T-cell (primary cell): ENCODE measurements at regions of chr17 and their contacts with region 1.

Region 1: DNA sequence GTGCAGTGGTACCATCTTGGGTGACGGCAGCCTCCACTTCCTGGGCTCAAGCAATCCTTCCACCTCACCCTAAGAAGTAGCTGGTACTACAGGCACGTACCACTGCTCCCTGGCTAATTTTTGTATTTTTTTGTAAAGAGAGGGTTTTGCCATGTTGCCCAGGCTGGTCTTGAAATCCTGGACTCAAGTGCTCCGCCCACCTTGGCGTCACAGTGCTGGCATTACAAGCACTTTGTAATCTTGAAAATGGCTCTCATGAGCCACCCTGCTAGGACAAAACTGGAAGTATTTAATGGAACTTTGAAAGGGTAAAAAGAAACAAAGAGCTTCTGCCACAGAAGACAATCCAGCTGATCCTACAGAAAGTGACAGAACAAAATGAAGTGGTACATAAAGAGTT is 9.2 kb downstream of the SUMO2 start:
- DNase-seq: no peak
- ATAC-seq: no peak
- H3K4me3 ChIP-seq: no peak overlapping the region
- H3K4me3 Mint-ChIP-seq: no peak overlapping the region
- H3K27ac ChIP-seq: no peak overlapping the region
- H3K27ac Mint-ChIP-seq: peak overlapping the region in 1 of 2 donors; percentile 36
- H3K4me1 ChIP-seq: peaks cover 0 to 25% of the 10 kb centered on the region in 2 experiments
- H3K4me1 Mint-ChIP-seq: peaks cover 16 to 24% (median 23%) of the 10 kb centered on the region in 3 donors
- H3K27me3 ChIP-seq: no peaks in the 10 kb centered on the region
- H3K27me3 Mint-ChIP-seq: no peaks in the 10 kb centered on the region

Region 2: GRCh38 chr17:73591296-73592078 is 1582.0 kb before region 1 on chr17:
- CTCF ChIA-PET with region 1: no interaction called
- POLR2A ChIA-PET with region 1: interaction called in 1 of 2 experiments, 10 read pairs
- DNase-seq: peak; percentile 17 to 84 (median 67)
- ATAC-seq: peak; percentile 86 to 93 (median 88)
- H3K4me3 ChIP-seq: peak overlapping the region in 1 of 2 donors; percentile 34
- H3K4me3 Mint-ChIP-seq: peak overlapping the region; percentile 65 to 80 (median 74)
- H3K27ac ChIP-seq: peak overlapping the region; percentile 65
- H3K27ac Mint-ChIP-seq: peak overlapping the region; percentile 95 to 99
- H3K4me1 ChIP-seq: peaks cover 37 to 93% of the 10 kb centered on the region in 2 experiments
- H3K4me1 Mint-ChIP-seq: peaks cover 79 to 91% (median 83%) of the 10 kb centered on the region in 3 donors
- H3K27me3 ChIP-seq: peaks cover 0 to 8% of the 10 kb centered on the region in 2 experiments
- H3K27me3 Mint-ChIP-seq: no peaks in the 10 kb centered on the region

Region 3: DNA sequence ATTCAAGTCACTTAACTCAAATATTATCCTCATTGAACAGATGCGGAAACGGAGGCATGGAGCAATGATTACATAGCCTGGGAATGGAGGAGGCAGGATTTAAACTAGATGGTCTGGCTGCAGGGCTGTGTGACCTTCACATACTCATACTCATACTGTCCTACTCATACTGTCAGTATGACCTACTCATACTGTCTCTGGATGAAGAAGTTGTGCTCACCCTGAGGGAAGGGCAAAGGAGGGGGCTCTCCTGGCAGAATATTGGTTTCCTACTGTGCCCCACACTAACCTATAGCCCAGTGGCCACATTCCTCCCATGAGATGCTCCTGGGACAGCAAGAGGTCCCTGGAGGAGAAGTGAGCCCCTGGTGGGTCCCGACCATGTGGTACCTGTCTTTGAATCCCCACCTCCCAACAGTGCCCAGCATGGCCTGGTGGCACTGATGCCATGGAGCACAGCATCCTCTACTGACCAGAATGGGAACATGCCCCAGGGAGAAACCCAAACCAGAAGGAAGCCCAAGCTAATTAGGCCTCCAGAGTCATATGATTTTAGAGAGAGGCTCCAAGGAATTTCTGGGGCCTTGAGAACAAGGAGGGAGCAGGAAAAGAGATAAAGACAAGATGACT is 1332.0 kb before region 1 on chr17:
- CTCF ChIA-PET with region 1: no interaction called
- POLR2A ChIA-PET with region 1: no interaction called
- DNase-seq: peak in 10 of 35 experiments; percentile 7 to 49 (median 14)
- ATAC-seq: peak in 3 of 4 experiments; percentile 32 to 75 (median 51)
- H3K4me3 ChIP-seq: no peak overlapping the region
- H3K4me3 Mint-ChIP-seq: no peak overlapping the region
- H3K27ac ChIP-seq: no peak overlapping the region
- H3K27ac Mint-ChIP-seq: no peak overlapping the region
- H3K4me1 ChIP-seq: peaks cover 0 to 4% of the 10 kb centered on the region in 2 experiments
- H3K4me1 Mint-ChIP-seq: peaks cover 7 to 17% (median 7%) of the 10 kb centered on the region in 3 donors
- H3K27me3 ChIP-seq: peaks cover 0 to 18% of the 10 kb centered on the region in 2 experiments
- H3K27me3 Mint-ChIP-seq: no peaks in the 10 kb centered on the region

Region 4: DNA sequence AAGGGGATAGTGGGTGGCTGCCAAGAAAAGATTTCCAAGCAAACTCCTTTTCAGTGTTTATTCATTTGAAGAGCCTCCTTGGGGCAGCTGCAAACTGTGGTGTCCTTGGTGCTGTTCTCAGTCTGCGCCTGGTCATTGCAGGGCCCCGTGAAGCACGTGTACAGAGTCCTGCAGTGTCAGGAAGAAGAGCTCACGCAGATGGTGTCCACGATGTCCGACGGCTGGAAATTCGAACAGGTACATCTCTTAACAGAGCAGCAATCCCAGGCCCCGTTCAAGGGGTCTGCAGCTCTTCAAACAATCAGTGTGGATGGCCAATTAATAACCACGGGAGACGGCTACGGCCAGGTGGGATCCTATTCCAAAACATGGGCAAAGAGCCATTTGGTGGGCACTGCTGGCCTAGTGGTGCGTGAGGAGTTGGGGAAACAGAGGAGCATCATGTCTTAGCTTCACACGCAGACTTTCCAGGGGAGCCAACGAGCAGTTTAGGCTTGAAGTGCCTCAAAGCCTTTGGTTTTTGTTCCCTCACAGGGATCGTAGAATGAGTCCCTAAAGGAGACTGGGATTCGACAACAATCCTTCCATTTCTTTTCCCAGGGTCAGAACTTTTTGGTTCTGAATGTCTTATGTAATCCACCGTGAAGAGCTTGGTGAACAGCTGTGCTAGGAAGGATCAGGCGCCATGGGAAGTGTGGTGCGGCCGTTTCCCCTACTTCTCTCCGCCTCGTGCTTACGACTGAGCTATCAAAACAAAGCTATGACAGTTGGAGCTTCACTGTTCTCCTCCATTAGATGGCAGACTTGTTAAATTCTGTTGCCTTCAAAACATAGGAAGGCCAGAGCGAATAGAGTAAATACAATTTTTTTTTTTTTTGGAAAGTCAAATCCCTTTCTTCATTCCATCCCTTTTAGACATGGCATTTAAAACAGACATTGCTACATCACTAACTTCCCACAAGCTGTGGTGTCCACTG is 113.9 kb before region 1 on chr17:
- CTCF ChIA-PET with region 1: interaction called, 8 to 13 read pairs
- POLR2A ChIA-PET with region 1: no interaction called
- DNase-seq: peak in 2 of 35 experiments; percentile 17 to 51
- ATAC-seq: peak; percentile 70 to 92 (median 74)
- H3K4me3 ChIP-seq: no peak overlapping the region
- H3K4me3 Mint-ChIP-seq: no peak overlapping the region
- H3K27ac ChIP-seq: no peak overlapping the region
- H3K27ac Mint-ChIP-seq: peak overlapping the region; percentile 46 to 61
- H3K4me1 ChIP-seq: no peaks in the 10 kb centered on the region
- H3K4me1 Mint-ChIP-seq: peaks cover 10 to 18% (median 12%) of the 10 kb centered on the region in 3 donors
- H3K27me3 ChIP-seq: no peaks in the 10 kb centered on the region
- H3K27me3 Mint-ChIP-seq: no peaks in the 10 kb centered on the region

Region 5: DNA sequence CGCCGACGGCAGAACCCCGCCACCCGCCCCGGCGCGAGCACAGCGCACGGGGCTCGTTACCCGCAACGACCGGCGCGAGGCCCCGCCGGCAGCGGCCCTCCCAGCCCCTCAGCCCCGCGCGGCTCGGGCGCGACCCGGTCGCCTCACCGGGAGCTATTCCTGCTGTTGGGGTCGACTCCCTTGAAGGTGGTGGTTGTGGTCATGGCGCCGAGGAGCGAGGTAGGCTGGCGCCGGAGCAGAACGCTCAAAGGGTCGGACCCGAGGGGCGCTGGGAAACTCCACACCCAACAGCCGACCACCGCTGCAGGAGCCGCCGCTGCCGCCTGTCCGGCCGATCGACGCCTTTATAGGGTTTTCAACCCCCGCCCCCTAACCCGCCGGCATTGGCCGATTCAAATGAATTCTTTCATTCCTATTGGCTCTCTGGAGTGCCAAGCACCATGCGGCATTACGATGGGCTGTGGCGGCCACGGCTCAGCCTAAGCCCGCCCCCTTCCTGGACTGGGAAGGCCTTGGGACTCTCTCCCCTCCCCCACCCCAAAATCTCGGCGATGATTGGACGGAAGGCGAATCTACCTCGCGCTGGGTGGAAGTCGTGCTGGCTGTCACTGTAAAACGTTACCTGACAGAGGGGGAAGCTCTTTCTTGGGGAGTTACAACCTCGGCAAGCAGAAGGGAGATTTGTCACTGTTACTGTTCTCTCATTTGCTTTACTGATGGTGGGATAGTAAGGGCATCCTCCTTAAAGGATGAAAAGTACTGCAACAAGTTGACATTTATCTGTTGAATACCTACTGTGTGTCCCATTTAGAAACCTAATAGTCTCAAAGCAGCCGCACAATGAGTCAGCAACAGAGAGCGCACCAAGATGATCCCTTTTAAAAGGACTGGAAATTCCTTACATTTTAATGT is 19.1 kb before region 1 on chr17 and contains the start of gene JPT1:
- CTCF ChIA-PET with region 1: interaction called in 1 of 2 experiments, 13 read pairs
- POLR2A ChIA-PET with region 1: no interaction called
- DNase-seq: peak; percentile 93 to 98 (median 97)
- ATAC-seq: peak; percentile 97 to 99 (median 98)
- H3K4me3 ChIP-seq: peak within 1 kb of the TSS; percentile 92 to 96
- H3K4me3 Mint-ChIP-seq: peak within 1 kb of the TSS; percentile 90 to 95 (median 92)
- H3K27ac ChIP-seq: peak within 1 kb of the TSS; percentile 40
- H3K27ac Mint-ChIP-seq: peak within 1 kb of the TSS; percentile 81 to 84
- H3K4me1 ChIP-seq: peaks cover 15 to 23% of the 10 kb centered on the region in 2 experiments
- H3K4me1 Mint-ChIP-seq: peaks cover 28 to 37% (median 35%) of the 10 kb centered on the region in 3 donors
- H3K27me3 ChIP-seq: no peaks in the 10 kb centered on the region
- H3K27me3 Mint-ChIP-seq: no peaks in the 10 kb centered on the region
- total RNA-seq, gene JPT1: 28.3 to 55.8 (median 45.4) TPM

Region 6: GRCh38 chr17:75205037-75205792 is 31.7 kb after region 1 on chr17 and contains the start of gene NUP85:
- CTCF ChIA-PET with region 1: interaction called, 8 to 18 read pairs
- POLR2A ChIA-PET with region 1: interaction called in 1 of 2 experiments, 4 read pairs
- DNase-seq: peak; percentile 78 to 95 (median 89)
- ATAC-seq: peak; percentile 85 to 95 (median 92)
- H3K4me3 ChIP-seq: peak within 1 kb of the TSS; percentile 95 to 99
- H3K4me3 Mint-ChIP-seq: peak within 1 kb of the TSS; percentile 93 to 95 (median 94)
- H3K27ac ChIP-seq: peak within 1 kb of the TSS; percentile 91
- H3K27ac Mint-ChIP-seq: peak within 1 kb of the TSS; percentile 99 to 100
- H3K4me1 ChIP-seq: peaks cover 8 to 25% of the 10 kb centered on the region in 2 experiments
- H3K4me1 Mint-ChIP-seq: peaks cover 23 to 37% (median 32%) of the 10 kb centered on the region in 3 donors
- H3K27me3 ChIP-seq: no peaks in the 10 kb centered on the region
- H3K27me3 Mint-ChIP-seq: no peaks in the 10 kb centered on the region
- total RNA-seq, gene NUP85: 56.2 to 128 (median 106) TPM